Activated CD4-positive, alpha-beta memory T cell treated with anti-CD3 and anti-CD28 coated beads for 36 hours (primary cell): ENCODE measurements at regions of chr3 and their contacts with region 1.

Region 1: DNA sequence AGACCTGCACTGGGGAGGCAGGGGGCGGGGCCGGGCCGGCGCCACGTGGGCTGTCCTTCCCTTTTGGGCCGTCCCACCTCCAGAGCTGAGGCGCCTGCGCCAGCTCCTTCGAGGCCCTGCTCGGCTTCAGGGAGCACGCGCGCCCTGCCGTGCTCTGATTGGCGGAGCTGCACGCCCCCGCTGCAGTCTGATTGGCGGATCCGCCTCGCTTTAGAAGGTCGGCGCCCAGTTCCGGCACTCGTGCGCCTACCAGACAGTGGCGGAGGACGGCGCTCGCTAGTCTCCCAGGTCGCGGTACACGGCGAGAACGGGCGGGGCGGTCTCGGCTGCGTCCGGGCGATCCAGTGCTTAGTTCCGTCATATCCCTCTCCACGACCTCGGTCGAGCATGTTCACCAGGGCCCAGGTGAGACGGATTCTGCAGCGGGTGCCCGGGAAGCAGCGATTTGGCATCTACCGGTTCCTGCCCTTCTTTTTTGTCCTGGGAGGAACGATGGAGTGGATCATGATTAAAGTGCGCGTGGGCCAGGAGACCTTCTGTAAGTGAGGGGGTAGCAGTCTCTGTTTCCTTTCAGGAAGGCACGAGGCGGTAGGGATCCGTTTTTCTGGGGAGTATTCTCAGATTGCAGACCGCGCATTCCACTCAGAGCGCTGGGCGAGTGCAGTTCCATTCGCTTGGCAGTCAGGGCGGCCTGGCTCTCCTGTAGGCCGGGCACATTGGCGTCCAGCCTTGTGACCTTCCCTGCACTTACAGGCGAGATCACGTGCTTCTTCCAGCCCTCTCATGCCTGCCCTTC is at the start of gene UQCC5:
- DNase-seq: peak; percentile 99
- H3K4me3 Mint-ChIP-seq: peak within 1 kb of the TSS; percentile 92
- H3K27ac Mint-ChIP-seq: peak within 1 kb of the TSS; percentile 92
- H3K4me1 Mint-ChIP-seq: peaks cover 41% of the 10 kb centered on the region
- H3K27me3 Mint-ChIP-seq: no peaks in the 10 kb centered on the region
- total RNA-seq, gene UQCC5: 12.9 to 13.3 TPM

Region 2: DNA sequence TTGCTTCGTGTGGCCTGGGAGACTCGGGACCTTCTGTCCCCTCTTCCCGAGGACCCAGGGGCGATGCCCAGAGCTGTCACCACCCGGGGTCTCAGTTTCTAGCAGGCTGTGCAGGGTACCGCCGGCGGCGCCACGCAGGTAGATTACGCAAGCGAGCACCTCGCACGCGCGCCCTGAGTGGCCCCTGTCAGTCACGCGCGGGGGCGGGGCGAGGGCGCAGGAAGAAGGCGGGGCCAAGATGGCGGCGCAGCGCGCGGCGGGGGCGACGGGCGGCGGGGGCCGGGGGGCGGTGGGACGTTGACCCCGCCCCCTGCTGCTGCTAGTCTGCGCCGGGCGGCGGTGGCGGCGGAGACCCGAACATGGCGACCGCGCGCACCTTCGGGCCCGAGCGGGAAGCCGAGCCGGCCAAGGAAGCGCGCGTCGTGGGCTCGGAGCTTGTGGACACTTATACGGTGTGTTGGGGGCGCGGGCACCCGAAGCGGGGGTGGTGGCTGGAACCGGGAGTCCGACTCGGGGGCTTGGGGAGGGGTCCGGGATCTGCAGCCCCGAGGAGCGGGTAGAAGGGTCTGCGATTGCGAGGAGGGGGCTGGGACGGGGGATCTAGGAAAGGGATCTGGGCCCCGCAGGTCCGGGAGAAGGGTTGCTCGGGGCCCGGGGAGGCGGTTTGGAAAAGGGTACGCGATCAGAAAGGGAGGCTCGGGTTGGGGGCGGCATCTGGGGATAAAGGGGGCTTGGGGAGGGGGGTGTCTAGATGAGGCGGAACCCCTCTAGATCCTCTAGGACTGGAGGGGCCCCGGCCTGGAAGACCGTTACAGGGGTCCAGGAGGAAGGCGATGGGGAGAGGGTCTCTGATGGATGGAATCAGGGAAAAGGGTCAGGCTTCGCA is 81.0 kb before region 1 on chr3 and contains the start of gene NISCH:
- CTCF ChIA-PET with region 1: no interaction called
- POLR2A ChIA-PET with region 1: interaction called, 3 read pairs
- intact Hi-C with region 1: loop called (anchors 1 kb)
- DNase-seq: peak; percentile 97
- H3K4me3 Mint-ChIP-seq: peak within 1 kb of the TSS; percentile 89
- H3K27ac Mint-ChIP-seq: peak within 1 kb of the TSS; percentile 87
- H3K4me1 Mint-ChIP-seq: peaks cover 35% of the 10 kb centered on the region
- H3K27me3 Mint-ChIP-seq: no peaks in the 10 kb centered on the region
- total RNA-seq, gene NISCH: 50.8 to 60.2 TPM

Region 3: GRCh38 chr3:52685709-52686691 is 149.4 kb after region 1 on chr3 and contains the starts of genes GNL3 and PBRM1:
- CTCF ChIA-PET with region 1: no interaction called
- POLR2A ChIA-PET with region 1: interaction called, 6 read pairs
- intact Hi-C with region 1: loop called (anchors 1 kb)
- DNase-seq: peak; percentile 96
- H3K4me3 Mint-ChIP-seq: peak within 1 kb of the TSS; percentile 91
- H3K27ac Mint-ChIP-seq: peak within 1 kb of the TSS; percentile 96
- H3K4me1 Mint-ChIP-seq: peaks cover 72% of the 10 kb centered on the region
- H3K27me3 Mint-ChIP-seq: no peaks in the 10 kb centered on the region
- total RNA-seq, gene GNL3: 167 to 172 TPM
- total RNA-seq, gene PBRM1: 52.3 to 59.2 TPM

Region 4: GRCh38 chr3:52770496-52771333 is 234.1 kb after region 1 on chr3 and contains the start of gene NEK4:
- CTCF ChIA-PET with region 1: no interaction called
- POLR2A ChIA-PET with region 1: no interaction called
- intact Hi-C with region 1: loop called (anchors 1 kb)
- DNase-seq: peak; percentile 93
- H3K4me3 Mint-ChIP-seq: peak within 1 kb of the TSS; percentile 91
- H3K27ac Mint-ChIP-seq: peak within 1 kb of the TSS; percentile 84
- H3K4me1 Mint-ChIP-seq: peaks cover 20% of the 10 kb centered on the region
- H3K27me3 Mint-ChIP-seq: no peaks in the 10 kb centered on the region
- total RNA-seq, gene NEK4: 16.9 to 21.7 TPM

Region 5: DNA sequence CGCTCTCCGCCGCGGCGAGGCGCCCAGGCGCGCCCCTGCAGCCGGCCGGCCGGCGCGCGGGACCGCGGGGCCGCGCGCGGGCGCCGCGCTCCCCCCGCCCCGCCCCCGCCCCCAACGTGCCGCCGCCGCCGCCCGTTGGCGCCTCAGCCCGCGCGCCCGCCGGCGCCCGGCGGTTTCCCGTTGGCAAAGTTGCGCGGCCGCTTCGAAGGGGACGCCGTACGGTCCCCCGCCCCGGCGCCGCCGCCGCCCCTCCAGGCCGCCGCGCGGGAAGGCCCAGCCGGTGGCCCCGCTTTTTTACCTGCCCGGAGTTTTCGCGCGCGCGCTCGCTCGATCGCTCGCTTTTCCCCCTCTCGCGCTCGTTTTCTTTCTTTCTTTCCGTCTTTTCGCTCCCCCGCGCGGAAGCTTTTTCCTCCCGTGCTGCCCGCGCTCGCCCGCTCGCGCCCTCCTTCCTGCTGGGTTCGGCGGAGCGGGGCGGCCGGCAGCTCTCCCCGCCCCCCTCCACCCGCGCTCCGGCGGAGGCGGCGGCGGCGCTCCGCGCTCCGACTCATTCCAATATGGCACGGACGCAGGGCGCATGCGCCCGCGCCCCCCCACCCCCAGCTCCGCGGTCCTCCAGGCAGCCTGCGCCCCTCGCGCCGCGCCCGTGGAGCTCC is 509.1 kb after region 1 on chr3 and contains the start of gene SFMBT1:
- CTCF ChIA-PET with region 1: no interaction called
- POLR2A ChIA-PET with region 1: no interaction called
- intact Hi-C with region 1: loop called (anchors 10 kb)
- DNase-seq: peak; percentile 83
- H3K4me3 Mint-ChIP-seq: peak within 1 kb of the TSS; percentile 96
- H3K27ac Mint-ChIP-seq: peak within 1 kb of the TSS; percentile 97
- H3K4me1 Mint-ChIP-seq: peaks cover 44% of the 10 kb centered on the region
- H3K27me3 Mint-ChIP-seq: peaks cover 2% of the 10 kb centered on the region
- total RNA-seq, gene SFMBT1: 22.1 to 22.8 TPM

Region 6: GRCh38 chr3:53881691-53882593 is 1345.4 kb after region 1 on chr3 and contains the start of gene ACTR8:
- CTCF ChIA-PET with region 1: no interaction called
- POLR2A ChIA-PET with region 1: no interaction called
- intact Hi-C with region 1: loop called (anchors 10 kb)
- DNase-seq: peak; percentile 88
- H3K4me3 Mint-ChIP-seq: peak within 1 kb of the TSS; percentile 89
- H3K27ac Mint-ChIP-seq: peak within 1 kb of the TSS; percentile 90
- H3K4me1 Mint-ChIP-seq: peaks cover 23% of the 10 kb centered on the region
- H3K27me3 Mint-ChIP-seq: no peaks in the 10 kb centered on the region
- total RNA-seq, gene ACTR8: 32.0 to 33.1 TPM